Calu3 (cell line): ENCODE measurements at regions of chr7 and their contacts with region 1.

Region 1: DNA sequence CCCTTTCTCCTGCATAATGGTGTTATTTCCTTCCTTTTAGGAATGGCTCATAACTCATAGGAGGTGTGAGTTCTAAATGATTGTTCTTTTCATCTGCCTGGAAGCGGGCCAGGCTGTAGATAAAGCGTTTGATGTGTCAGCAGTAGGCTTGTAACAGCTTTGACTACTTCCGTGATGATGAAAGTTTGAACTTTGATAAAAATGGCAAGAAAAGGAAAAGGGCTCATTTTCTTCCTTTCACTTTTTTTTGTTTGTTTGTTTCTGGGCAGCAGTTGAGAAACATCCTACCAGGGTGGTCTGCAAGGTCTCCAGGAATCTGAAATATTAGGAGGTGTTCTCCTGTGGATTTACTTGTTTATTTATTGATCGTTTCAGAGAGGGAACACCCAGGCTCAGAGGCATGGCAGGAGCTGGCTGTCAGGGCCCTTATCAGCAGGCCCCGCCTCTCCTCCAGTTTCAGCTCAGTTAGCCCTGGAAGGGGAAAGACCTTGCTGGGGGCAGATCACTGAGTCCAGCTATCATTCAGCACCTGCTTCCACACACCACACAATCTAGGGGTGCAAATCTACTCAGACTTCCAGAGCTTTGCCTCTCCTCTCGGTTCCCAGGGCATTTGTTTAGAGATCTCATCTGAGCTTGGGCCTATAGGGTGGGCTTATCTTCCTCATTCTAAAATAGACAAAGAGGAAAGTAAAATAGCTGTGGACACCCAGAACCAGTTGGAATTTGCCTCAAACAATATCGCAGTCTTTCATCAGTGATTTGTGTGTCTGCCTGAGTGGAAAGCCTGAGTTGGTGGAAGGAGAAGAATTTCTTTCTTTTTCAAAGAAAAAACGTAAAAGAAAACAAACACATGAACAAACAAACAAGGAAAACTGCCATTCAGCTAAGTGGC is 131.0 kb downstream of the BMPER start:
- DNase-seq: peak; percentile 81
- H3K4me3 Mint-ChIP-seq: peak overlapping the region; percentile 45
- H3K27ac Mint-ChIP-seq: peak overlapping the region; percentile 60
- H3K4me1 Mint-ChIP-seq: peaks cover 23% of the 10 kb centered on the region
- H3K27me3 Mint-ChIP-seq: peaks cover 8% of the 10 kb centered on the region
- CTCF ChIP-seq: no peak

Region 2: DNA sequence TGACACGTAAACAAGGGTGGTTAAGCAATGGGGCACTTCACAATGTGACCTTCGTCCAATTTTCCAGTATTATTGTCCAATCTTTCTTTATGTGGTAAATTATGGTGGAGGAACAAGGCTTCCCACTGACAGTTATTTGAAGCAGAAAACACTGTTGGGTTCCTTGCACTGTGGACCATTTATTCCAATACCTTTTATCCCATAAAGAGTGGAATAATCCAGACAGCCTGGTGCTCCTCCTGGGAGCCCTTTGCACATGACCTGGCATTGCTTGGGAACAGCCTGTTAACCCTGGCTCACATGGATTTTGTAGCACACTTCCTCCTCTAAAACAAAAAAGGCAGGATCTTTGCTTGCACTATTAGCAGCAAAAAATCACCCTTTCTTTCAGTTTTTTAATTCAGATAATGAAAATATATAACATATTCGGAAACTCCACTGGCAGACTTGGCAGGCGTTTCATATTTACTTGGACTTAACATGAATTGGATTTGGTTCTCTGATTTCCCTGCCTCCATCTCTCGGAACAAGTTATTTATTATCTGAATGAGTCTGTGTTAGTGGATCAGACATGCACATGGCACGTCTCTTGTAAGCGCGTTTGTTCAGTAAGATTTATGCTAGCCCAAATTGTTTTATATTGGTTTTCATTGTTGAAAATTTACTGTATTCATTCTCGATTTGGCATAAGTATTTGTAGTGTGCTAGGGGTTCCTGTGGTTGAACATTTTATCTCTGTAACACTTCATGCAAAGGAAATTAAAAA is 71.7 kb before region 1 on chr7:
- CTCF ChIA-PET with region 1: no interaction called
- intact Hi-C with region 1: no loop called
- DNase-seq: no peak
- H3K4me3 Mint-ChIP-seq: no peak overlapping the region
- H3K27ac Mint-ChIP-seq: no peak overlapping the region
- H3K4me1 Mint-ChIP-seq: no peaks in the 10 kb centered on the region
- H3K27me3 Mint-ChIP-seq: peaks cover 20% of the 10 kb centered on the region
- CTCF ChIP-seq: no peak

Region 3: DNA sequence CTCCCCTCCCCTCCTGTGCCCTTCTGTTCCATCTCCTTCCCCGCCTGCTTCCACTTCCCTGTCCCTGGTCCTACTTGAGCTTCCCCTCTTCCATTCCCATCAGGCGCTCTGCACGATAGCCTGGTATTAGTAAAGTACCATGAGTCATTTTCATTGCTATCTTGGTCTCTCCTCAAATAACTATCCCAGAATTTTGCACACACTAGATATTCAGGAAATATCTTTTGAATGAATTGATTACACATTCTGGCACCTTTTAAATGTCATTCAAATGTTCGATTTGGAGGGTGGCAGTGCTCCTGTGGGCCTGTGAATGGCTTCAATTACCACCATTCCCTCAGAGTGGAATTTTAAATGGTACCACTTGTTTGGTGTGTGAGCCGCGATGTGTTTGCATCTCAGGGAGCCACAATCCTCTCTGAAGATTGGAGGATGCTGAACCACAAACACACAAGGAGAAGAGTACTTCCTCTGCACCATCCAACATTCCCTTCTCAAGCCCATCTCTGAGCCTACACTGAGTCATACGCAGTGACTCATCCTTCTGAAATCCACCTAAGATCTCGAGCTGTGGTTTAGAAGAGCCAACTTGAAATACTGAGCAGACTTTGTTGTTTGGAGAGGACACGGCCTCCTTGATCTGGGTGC is 49.2 kb before region 1 on chr7:
- CTCF ChIA-PET with region 1: interaction called, 3 read pairs
- intact Hi-C with region 1: loop called (anchors 1 kb)
- DNase-seq: peak; percentile 75
- H3K4me3 Mint-ChIP-seq: no peak overlapping the region
- H3K27ac Mint-ChIP-seq: peak overlapping the region; percentile 32
- H3K4me1 Mint-ChIP-seq: peaks cover 23% of the 10 kb centered on the region
- H3K27me3 Mint-ChIP-seq: peaks cover under 1% of the 10 kb centered on the region
- CTCF ChIP-seq: no peak

Region 4: DNA sequence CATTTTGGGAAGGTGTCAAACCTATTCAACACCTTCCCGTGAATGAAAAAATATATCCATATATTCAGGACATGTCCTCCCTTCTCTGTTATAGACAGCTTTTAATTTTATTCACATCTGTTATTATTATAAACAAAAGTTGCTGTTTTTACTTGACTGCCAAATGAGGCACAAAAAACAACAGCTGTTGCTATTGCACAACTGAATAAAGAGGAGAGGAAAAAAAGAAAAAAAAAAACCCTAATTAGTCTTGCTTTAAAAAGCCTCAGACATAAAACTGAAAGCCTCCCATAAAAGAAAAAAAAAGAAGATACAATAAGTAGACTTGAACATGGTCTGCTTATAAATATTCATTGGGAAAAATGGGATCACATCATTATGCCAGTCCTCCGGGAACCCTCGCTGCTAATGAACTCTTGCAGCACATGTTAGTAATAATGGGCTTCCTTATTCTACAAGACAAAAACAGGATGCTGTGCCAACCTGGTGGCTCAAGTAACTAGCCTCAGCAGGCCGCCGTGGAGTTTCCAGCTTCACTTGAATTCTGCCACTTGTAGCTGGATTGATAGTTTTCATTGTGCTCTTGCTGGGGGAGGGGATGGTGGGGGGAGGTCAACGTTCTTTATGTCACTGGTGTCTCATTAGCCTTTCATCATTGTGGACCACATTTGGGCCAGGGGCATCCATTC is 22.6 kb after region 1 on chr7:
- CTCF ChIA-PET with region 1: interaction called, 12 read pairs
- intact Hi-C with region 1: no loop called
- DNase-seq: no peak
- H3K4me3 Mint-ChIP-seq: no peak overlapping the region
- H3K27ac Mint-ChIP-seq: no peak overlapping the region
- H3K4me1 Mint-ChIP-seq: peaks cover 40% of the 10 kb centered on the region
- H3K27me3 Mint-ChIP-seq: no peaks in the 10 kb centered on the region
- CTCF ChIP-seq: no peak

Region 5: GRCh38 chr7:34069630-34070270 is 33.5 kb after region 1 on chr7:
- CTCF ChIA-PET with region 1: interaction called, 12 read pairs
- intact Hi-C with region 1: loop called (anchors 5 kb)
- DNase-seq: peak; percentile 43
- H3K4me3 Mint-ChIP-seq: peak overlapping the region; percentile 6
- H3K27ac Mint-ChIP-seq: peak overlapping the region; percentile 43
- H3K4me1 Mint-ChIP-seq: peaks cover 53% of the 10 kb centered on the region
- H3K27me3 Mint-ChIP-seq: no peaks in the 10 kb centered on the region
- CTCF ChIP-seq: no peak

Region 6: DNA sequence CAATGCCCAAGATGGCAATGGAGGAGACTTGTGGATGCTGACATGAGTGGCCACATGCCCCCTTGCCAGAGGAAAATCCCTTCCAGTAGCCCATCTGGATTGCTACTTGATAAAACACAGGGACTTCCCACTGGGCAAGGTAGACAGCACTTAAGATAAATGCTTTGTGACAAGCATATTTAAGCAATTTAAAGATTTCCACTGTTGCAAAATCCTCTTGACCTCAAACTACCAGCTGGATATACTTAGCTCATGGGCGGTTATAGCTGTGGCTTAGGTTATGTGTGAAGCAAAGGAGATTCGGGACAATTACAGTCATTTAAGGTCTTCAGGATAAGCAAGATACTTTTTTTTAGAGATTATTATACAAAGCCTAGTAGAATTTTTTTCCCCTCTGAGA is 107.1 kb after region 1 on chr7:
- CTCF ChIA-PET with region 1: no interaction called
- intact Hi-C with region 1: no loop called
- DNase-seq: no peak
- H3K4me3 Mint-ChIP-seq: no peak overlapping the region
- H3K27ac Mint-ChIP-seq: no peak overlapping the region
- H3K4me1 Mint-ChIP-seq: no peaks in the 10 kb centered on the region
- H3K27me3 Mint-ChIP-seq: peaks cover 47% of the 10 kb centered on the region
- CTCF ChIP-seq: no peak